ENCODE measurements at regions of chr17 and their contacts with region 1.

Region 1: GRCh38 chr17:48892940-48893645 is 506 bp downstream of the ATP5MC1 start:
- DNase-seq: no peak
- ATAC-seq: no peak
- H3K4me3 ChIP-seq: peak overlapping the region; percentile 31 to 85 (median 75)
- H3K4me3 Mint-ChIP-seq: peak overlapping the region; percentile 95
- H3K27ac ChIP-seq: peak overlapping the region; percentile 88
- H3K27ac Mint-ChIP-seq: peak overlapping the region; percentile 93
- H3K4me1 ChIP-seq: peaks cover 17 to 23% of the 10 kb centered on the region in 2 donors
- H3K4me1 Mint-ChIP-seq: peaks cover 23% of the 10 kb centered on the region
- H3K27me3 ChIP-seq: no peaks in the 10 kb centered on the region
- H3K27me3 Mint-ChIP-seq: no peaks in the 10 kb centered on the region
- CTCF ChIP-seq: no peak

Region 2: GRCh38 chr17:48690655-48691054 is 202.4 kb before region 1 on chr17:
- CTCF ChIA-PET with region 1: no interaction called
- POLR2A ChIA-PET with region 1: no interaction called
- intact Hi-C with region 1: no loop called
- DNase-seq: no peak
- ATAC-seq: no peak
- H3K4me3 ChIP-seq: no peak overlapping the region
- H3K4me3 Mint-ChIP-seq: no peak overlapping the region
- H3K27ac ChIP-seq: no peak overlapping the region
- H3K27ac Mint-ChIP-seq: no peak overlapping the region
- H3K4me1 ChIP-seq: no peaks in the 10 kb centered on the region
- H3K4me1 Mint-ChIP-seq: no peaks in the 10 kb centered on the region
- H3K27me3 ChIP-seq: peaks cover 0 to 9% (median 4%) of the 10 kb centered on the region in 4 experiments
- H3K27me3 Mint-ChIP-seq: peaks cover 21% of the 10 kb centered on the region
- CTCF ChIP-seq: no peak

Region 3: DNA sequence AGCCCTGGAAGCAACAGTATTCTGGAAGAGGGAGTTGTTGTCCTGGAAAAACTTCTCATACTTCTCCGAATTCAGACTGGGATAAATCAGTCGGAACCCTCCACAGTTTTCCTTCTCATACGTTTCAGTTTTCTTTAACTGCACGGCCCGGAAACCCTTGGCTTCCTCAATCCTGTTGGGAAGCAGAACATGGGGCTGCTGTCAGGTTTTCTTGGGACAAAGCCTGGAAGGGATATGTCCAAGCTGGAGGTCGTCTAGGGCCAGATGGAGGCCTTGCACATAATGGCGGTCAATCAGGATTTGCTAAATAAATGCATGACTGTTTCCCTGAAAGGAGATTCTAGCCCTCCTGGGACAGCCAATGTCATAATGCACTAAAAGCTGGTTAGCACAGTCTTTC is 105.3 kb before region 1 on chr17:
- CTCF ChIA-PET with region 1: no interaction called
- POLR2A ChIA-PET with region 1: no interaction called
- intact Hi-C with region 1: no loop called
- DNase-seq: no peak
- ATAC-seq: no peak
- H3K4me3 ChIP-seq: no peak overlapping the region
- H3K4me3 Mint-ChIP-seq: no peak overlapping the region
- H3K27ac ChIP-seq: no peak overlapping the region
- H3K27ac Mint-ChIP-seq: no peak overlapping the region
- H3K4me1 ChIP-seq: peaks cover 0 to 10% of the 10 kb centered on the region in 2 donors
- H3K4me1 Mint-ChIP-seq: peaks cover 3% of the 10 kb centered on the region
- H3K27me3 ChIP-seq: peaks cover 0 to 23% (median 4%) of the 10 kb centered on the region in 4 experiments
- H3K27me3 Mint-ChIP-seq: peaks cover 46% of the 10 kb centered on the region
- CTCF ChIP-seq: no peak

Region 4: GRCh38 chr17:48830840-48831548 is 62.1 kb before region 1 on chr17 and contains the start of gene CALCOCO2:
- CTCF ChIA-PET with region 1: interaction called, 4 read pairs
- POLR2A ChIA-PET with region 1: no interaction called
- intact Hi-C with region 1: loop called (anchors 1 kb)
- DNase-seq: peak; percentile 95
- ATAC-seq: peak; percentile 94
- H3K4me3 ChIP-seq: peak within 1 kb of the TSS; percentile 85 to 99 (median 90)
- H3K4me3 Mint-ChIP-seq: peak within 1 kb of the TSS; percentile 100
- H3K27ac ChIP-seq: peak within 1 kb of the TSS; percentile 93 to 95
- H3K27ac Mint-ChIP-seq: peak within 1 kb of the TSS; percentile 98
- H3K4me1 ChIP-seq: peaks cover 23 to 33% of the 10 kb centered on the region in 2 donors
- H3K4me1 Mint-ChIP-seq: peaks cover 39% of the 10 kb centered on the region
- H3K27me3 ChIP-seq: no peaks in the 10 kb centered on the region
- H3K27me3 Mint-ChIP-seq: peaks cover 6% of the 10 kb centered on the region
- CTCF ChIP-seq: no peak
- total RNA-seq, gene CALCOCO2: 139 and 148 TPM in 2 replicates

Region 5: GRCh38 chr17:48841395-48841831 is 51.7 kb before region 1 on chr17:
- CTCF ChIA-PET with region 1: interaction called, 3 read pairs
- POLR2A ChIA-PET with region 1: no interaction called
- intact Hi-C with region 1: loop called (anchors 1 kb)
- DNase-seq: peak; percentile 83
- ATAC-seq: peak; percentile 91
- H3K4me3 ChIP-seq: peak overlapping the region; percentile 23 to 56 (median 46)
- H3K4me3 Mint-ChIP-seq: peak overlapping the region; percentile 90
- H3K27ac ChIP-seq: peak overlapping the region; percentile 76 to 91
- H3K27ac Mint-ChIP-seq: peak overlapping the region; percentile 96
- H3K4me1 ChIP-seq: peaks cover 47 to 48% of the 10 kb centered on the region in 2 donors
- H3K4me1 Mint-ChIP-seq: peaks cover 42% of the 10 kb centered on the region
- H3K27me3 ChIP-seq: no peaks in the 10 kb centered on the region
- H3K27me3 Mint-ChIP-seq: no peaks in the 10 kb centered on the region
- CTCF ChIP-seq: no peak

Region 6: GRCh38 chr17:48944519-48945260 is 51.6 kb after region 1 on chr17 and contains the start of gene SNF8:
- CTCF ChIA-PET with region 1: no interaction called
- POLR2A ChIA-PET with region 1: interaction called, 9 read pairs
- intact Hi-C with region 1: loop called (anchors 1 kb)
- DNase-seq: peak; percentile 93
- ATAC-seq: peak; percentile 92
- H3K4me3 ChIP-seq: peak within 1 kb of the TSS; percentile 80 to 99 (median 91)
- H3K4me3 Mint-ChIP-seq: peak within 1 kb of the TSS; percentile 93
- H3K27ac ChIP-seq: peak within 1 kb of the TSS; percentile 87 to 97
- H3K27ac Mint-ChIP-seq: peak within 1 kb of the TSS; percentile 93
- H3K4me1 ChIP-seq: peaks cover 12 to 21% of the 10 kb centered on the region in 2 donors
- H3K4me1 Mint-ChIP-seq: peaks cover 15% of the 10 kb centered on the region
- H3K27me3 ChIP-seq: no peaks in the 10 kb centered on the region
- H3K27me3 Mint-ChIP-seq: no peaks in the 10 kb centered on the region
- CTCF ChIP-seq: no peak
- total RNA-seq, gene SNF8: 77.5 and 81.9 TPM in 2 replicates

Region 7: GRCh38 chr17:49016788-49017463 is 123.8 kb after region 1 on chr17:
- CTCF ChIA-PET with region 1: no interaction called
- POLR2A ChIA-PET with region 1: no interaction called
- intact Hi-C with region 1: no loop called
- DNase-seq: no peak
- ATAC-seq: no peak
- H3K4me3 ChIP-seq: no peak overlapping the region
- H3K4me3 Mint-ChIP-seq: no peak overlapping the region
- H3K27ac ChIP-seq: no peak overlapping the region
- H3K27ac Mint-ChIP-seq: no peak overlapping the region
- H3K4me1 ChIP-seq: peaks cover 0 to 5% of the 10 kb centered on the region in 2 donors
- H3K4me1 Mint-ChIP-seq: peaks cover 3% of the 10 kb centered on the region
- H3K27me3 ChIP-seq: peaks cover 0 to 41% (median 10%) of the 10 kb centered on the region in 4 experiments
- H3K27me3 Mint-ChIP-seq: peaks cover 40% of the 10 kb centered on the region
- CTCF ChIP-seq: no peak

Measured in B cell (primary cell).